Naive thymus-derived CD4-positive, alpha-beta T cell (primary cell): ENCODE measurements at regions of chr18 and their contacts with region 1.

Region 1: GRCh38 chr18:35497370-35498197 is at the start of gene INO80C:
- DNase-seq: peak; percentile 87 to 94 (median 92)
- ATAC-seq: peak; percentile 93
- H3K4me3 ChIP-seq: peak within 1 kb of the TSS; percentile 96
- H3K4me3 Mint-ChIP-seq: peak within 1 kb of the TSS; percentile 84 to 100 (median 96)
- H3K27ac ChIP-seq: peak within 1 kb of the TSS; percentile 94
- H3K27ac Mint-ChIP-seq: peak within 1 kb of the TSS; percentile 96 to 100 (median 100)
- H3K4me1 ChIP-seq: peaks cover 9 to 12% of the 10 kb centered on the region in 2 donors
- H3K4me1 Mint-ChIP-seq: peaks cover 22 to 62% (median 51%) of the 10 kb centered on the region in 7 donors
- H3K27me3 ChIP-seq: no peaks in the 10 kb centered on the region
- H3K27me3 Mint-ChIP-seq: no peaks in the 10 kb centered on the region
- total RNA-seq, gene INO80C: 20.6 to 26.8 (median 25.7) TPM

Region 2: DNA sequence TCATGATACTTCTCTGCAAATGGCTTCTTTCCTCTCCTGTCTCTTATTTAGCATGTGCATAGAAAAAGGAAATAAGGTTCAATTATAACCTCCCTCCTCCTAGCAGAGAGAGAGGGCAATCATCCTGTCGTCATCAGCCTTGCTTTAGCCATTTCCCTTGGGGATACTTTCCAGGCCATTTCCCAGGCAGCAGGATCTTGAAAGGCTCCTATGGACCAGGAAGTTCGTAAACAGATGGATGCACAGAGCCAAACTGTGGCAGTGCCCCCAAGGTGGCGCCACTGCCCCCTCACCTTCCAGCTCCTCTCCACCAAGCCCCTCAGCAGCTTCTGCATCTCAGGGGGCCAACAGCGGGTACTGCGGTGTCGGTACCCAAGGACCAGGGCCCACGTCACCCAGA is 630.1 kb before region 1 on chr18:
- CTCF ChIA-PET with region 1: no interaction called
- POLR2A ChIA-PET with region 1: no interaction called
- intact Hi-C with region 1: loop called in 1 of 2 experiments (anchors 10 kb)
- DNase-seq: no peak
- ATAC-seq: no peak
- H3K4me3 ChIP-seq: no peak overlapping the region
- H3K4me3 Mint-ChIP-seq: no peak overlapping the region
- H3K27ac ChIP-seq: no peak overlapping the region
- H3K27ac Mint-ChIP-seq: no peak overlapping the region
- H3K4me1 ChIP-seq: no peaks in the 10 kb centered on the region
- H3K4me1 Mint-ChIP-seq: peaks cover 0 to 24% (median 9%) of the 10 kb centered on the region in 7 donors
- H3K27me3 ChIP-seq: no peaks in the 10 kb centered on the region
- H3K27me3 Mint-ChIP-seq: peaks cover 0 to 10% (median 0%) of the 10 kb centered on the region in 5 donors

Region 3: GRCh38 chr18:35267161-35267651 is 230.4 kb before region 1 on chr18:
- CTCF ChIA-PET with region 1: no interaction called
- POLR2A ChIA-PET with region 1: no interaction called
- intact Hi-C with region 1: loop called in 1 of 2 experiments (anchors 1 kb)
- DNase-seq: peak; percentile 37 to 62 (median 54)
- ATAC-seq: peak; percentile 90
- H3K4me3 ChIP-seq: peak overlapping the region; percentile 78
- H3K4me3 Mint-ChIP-seq: peak overlapping the region; percentile 85 to 99 (median 97)
- H3K27ac ChIP-seq: peak overlapping the region; percentile 74
- H3K27ac Mint-ChIP-seq: peak overlapping the region; percentile 83 to 98 (median 97)
- H3K4me1 ChIP-seq: peaks cover 0 to 7% of the 10 kb centered on the region in 2 donors
- H3K4me1 Mint-ChIP-seq: peaks cover 13 to 35% (median 26%) of the 10 kb centered on the region in 7 donors
- H3K27me3 ChIP-seq: no peaks in the 10 kb centered on the region
- H3K27me3 Mint-ChIP-seq: no peaks in the 10 kb centered on the region

Region 4: GRCh38 chr18:35407871-35408481 is 89.6 kb before region 1 on chr18:
- CTCF ChIA-PET with region 1: no interaction called
- POLR2A ChIA-PET with region 1: no interaction called
- intact Hi-C with region 1: loop called (anchors 2 to 5 kb)
- DNase-seq: peak in 7 of 9 donors; percentile 14 to 70 (median 60)
- ATAC-seq: peak; percentile 90
- H3K4me3 ChIP-seq: no peak overlapping the region
- H3K4me3 Mint-ChIP-seq: no peak overlapping the region
- H3K27ac ChIP-seq: no peak overlapping the region
- H3K27ac Mint-ChIP-seq: no peak overlapping the region
- H3K4me1 ChIP-seq: peaks cover 0 to 4% of the 10 kb centered on the region in 2 donors
- H3K4me1 Mint-ChIP-seq: peaks cover 10 to 35% (median 17%) of the 10 kb centered on the region in 7 donors
- H3K27me3 ChIP-seq: no peaks in the 10 kb centered on the region
- H3K27me3 Mint-ChIP-seq: peaks cover 0 to 15% (median 7%) of the 10 kb centered on the region in 5 donors

Region 5: GRCh38 chr18:35972197-35973052 is 474.8 kb after region 1 on chr18 and contains the start of gene RMP24:
- CTCF ChIA-PET with region 1: no interaction called
- POLR2A ChIA-PET with region 1: interaction called, 6 read pairs
- intact Hi-C with region 1: loop called (anchors 1 kb)
- DNase-seq: peak; percentile 80 to 93 (median 90)
- ATAC-seq: peak; percentile 94
- H3K4me3 ChIP-seq: peak within 1 kb of the TSS; percentile 76
- H3K4me3 Mint-ChIP-seq: peak within 1 kb of the TSS; percentile 83 to 100 (median 96)
- H3K27ac ChIP-seq: peak within 1 kb of the TSS; percentile 82
- H3K27ac Mint-ChIP-seq: peak within 1 kb of the TSS; percentile 91 to 99 (median 96)
- H3K4me1 ChIP-seq: peaks cover 33% of the 10 kb centered on the region in 2 donors
- H3K4me1 Mint-ChIP-seq: peaks cover 36 to 78% (median 67%) of the 10 kb centered on the region in 7 donors
- H3K27me3 ChIP-seq: no peaks in the 10 kb centered on the region
- H3K27me3 Mint-ChIP-seq: no peaks in the 10 kb centered on the region

Region 6: GRCh38 chr18:36828630-36829361 is 1331.2 kb after region 1 on chr18 and contains the starts of genes KIAA1328 and TPGS2:
- CTCF ChIA-PET with region 1: no interaction called
- POLR2A ChIA-PET with region 1: no interaction called
- intact Hi-C with region 1: loop called (anchors 1 to 2 kb)
- DNase-seq: peak; percentile 77 to 90 (median 87)
- ATAC-seq: peak; percentile 96
- H3K4me3 ChIP-seq: peak within 1 kb of the TSS; percentile 79
- H3K4me3 Mint-ChIP-seq: peak within 1 kb of the TSS; percentile 73 to 98 (median 92)
- H3K27ac ChIP-seq: peak within 1 kb of the TSS; percentile 75
- H3K27ac Mint-ChIP-seq: peak within 1 kb of the TSS; percentile 57 to 98 (median 90)
- H3K4me1 ChIP-seq: peaks cover 15 to 18% of the 10 kb centered on the region in 2 donors
- H3K4me1 Mint-ChIP-seq: peaks cover 27 to 60% (median 47%) of the 10 kb centered on the region in 7 donors
- H3K27me3 ChIP-seq: no peaks in the 10 kb centered on the region
- H3K27me3 Mint-ChIP-seq: no peaks in the 10 kb centered on the region
- total RNA-seq, gene KIAA1328: 8.1 to 17.6 (median 16.0) TPM
- total RNA-seq, gene TPGS2: 16.9 to 92.8 (median 53.5) TPM